Heart right ventricle (tissue), 16 donors: ENCODE measurements at regions of chr10 and their contacts with region 1.

Region 1: GRCh38 chr10:119207367-119207668 is at the start of gene GRK5:
- DNase-seq: peak; percentile 95 to 96
- ATAC-seq: peak; percentile 89 to 98 (median 92)
- H3K4me3 ChIP-seq: peak within 1 kb of the TSS; percentile 72 to 99 (median 95)
- H3K27ac ChIP-seq: peak within 1 kb of the TSS; percentile 91 to 100 (median 98)
- H3K4me1 ChIP-seq: peaks cover 3 to 65% (median 52%) of the 10 kb centered on the region in 9 donors
- H3K27me3 ChIP-seq: no peaks in the 10 kb centered on the region
- CTCF ChIP-seq: no peak
- total RNA-seq, gene GRK5: 11.8 to 80.5 (median 32.5) TPM

Region 2: DNA sequence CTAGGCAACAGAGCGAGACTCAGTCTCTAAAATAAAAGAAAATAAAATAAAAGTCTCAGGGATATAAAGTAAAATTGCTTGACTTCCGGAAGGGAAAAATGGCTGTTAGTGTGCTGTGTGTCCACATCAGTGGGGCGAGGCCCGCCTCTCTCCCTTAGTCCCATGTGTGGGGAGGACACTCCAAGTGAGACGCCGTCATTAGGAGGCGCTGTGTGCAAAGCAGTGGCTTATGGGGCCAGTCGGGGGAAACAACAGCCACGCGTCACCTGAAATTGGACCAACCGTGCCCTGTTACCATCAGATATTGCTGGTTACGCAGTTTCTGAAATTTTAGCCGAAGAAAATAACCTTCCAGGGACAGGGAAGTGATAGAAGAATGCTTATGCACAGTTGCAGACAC is 57.6 kb before region 1 on chr10:
- intact Hi-C with region 1: no loop called
- DNase-seq: no peak
- ATAC-seq: peak in 1 of 8 donors; percentile 23
- H3K4me3 ChIP-seq: no peak overlapping the region
- H3K27ac ChIP-seq: no peak overlapping the region
- H3K4me1 ChIP-seq: peaks cover 0 to 11% (median 0%) of the 10 kb centered on the region in 9 donors
- H3K27me3 ChIP-seq: no peaks in the 10 kb centered on the region
- CTCF ChIP-seq: no peak

Region 3: GRCh38 chr10:119253433-119254174 is 46.3 kb after region 1 on chr10:
- intact Hi-C with region 1: loop called in 6 of 10 experiments (anchors 5 kb)
- DNase-seq: peak; percentile 68 to 73
- ATAC-seq: peak; percentile 65 to 75 (median 71)
- H3K4me3 ChIP-seq: no peak overlapping the region
- H3K27ac ChIP-seq: peak overlapping the region; percentile 57 to 86 (median 82)
- H3K4me1 ChIP-seq: peaks cover 54 to 86% (median 72%) of the 10 kb centered on the region in 9 donors
- H3K27me3 ChIP-seq: no peaks in the 10 kb centered on the region
- CTCF ChIP-seq: peak in 1 of 9 donors; percentile 8

Region 4: GRCh38 chr10:119270762-119271366 is 63.5 kb after region 1 on chr10:
- intact Hi-C with region 1: loop called in 4 of 10 experiments (anchors 2 to 10 kb)
- DNase-seq: peak; percentile 88 to 89
- ATAC-seq: peak; percentile 80 to 95 (median 90)
- H3K4me3 ChIP-seq: peak overlapping the region in 4 of 10 donors; percentile 13 to 37 (median 23)
- H3K27ac ChIP-seq: peak overlapping the region; percentile 48 to 90 (median 86)
- H3K4me1 ChIP-seq: peaks cover 29 to 94% (median 84%) of the 10 kb centered on the region in 9 donors
- H3K27me3 ChIP-seq: no peaks in the 10 kb centered on the region
- CTCF ChIP-seq: no peak

Region 5: DNA sequence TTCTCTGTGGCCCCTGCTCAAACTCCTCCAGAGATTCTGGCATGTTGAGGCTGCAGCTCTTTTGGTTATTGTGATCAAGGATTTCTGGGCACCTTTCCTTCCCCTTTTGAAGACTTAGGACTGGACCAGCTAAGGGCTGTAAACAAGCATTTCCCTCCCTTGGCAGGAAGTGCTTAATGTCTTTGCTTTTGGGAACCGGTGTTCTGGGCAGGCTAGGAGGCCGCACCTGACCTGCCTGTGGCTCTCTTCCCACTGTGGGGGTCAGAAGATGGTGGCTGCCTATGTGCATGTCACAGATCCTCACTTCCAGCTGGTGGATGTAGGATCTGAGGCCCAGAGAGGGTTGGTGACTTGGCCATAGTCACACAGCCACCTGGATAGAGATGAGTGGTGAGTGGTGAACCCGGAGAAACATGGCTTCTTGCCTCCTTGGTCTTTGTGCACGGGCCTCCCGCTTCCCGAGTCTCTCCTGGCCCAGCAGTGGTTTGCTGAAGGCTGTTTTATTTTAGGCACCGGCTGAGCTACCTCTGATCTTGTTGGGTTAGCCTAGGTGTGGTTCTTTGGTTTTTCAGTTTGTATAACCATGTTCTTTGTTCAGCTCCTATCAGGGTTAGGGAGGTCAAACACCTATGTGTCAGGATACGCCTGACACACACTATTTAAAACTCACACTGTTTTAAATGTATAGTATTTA is 82.1 kb after region 1 on chr10:
- intact Hi-C with region 1: loop called in 2 of 10 experiments (anchors 5 to 10 kb)
- DNase-seq: no peak
- ATAC-seq: peak in 4 of 8 donors; percentile 25 to 46 (median 38)
- H3K4me3 ChIP-seq: no peak overlapping the region
- H3K27ac ChIP-seq: peak overlapping the region; percentile 10 to 81 (median 62)
- H3K4me1 ChIP-seq: peaks cover 33 to 90% (median 79%) of the 10 kb centered on the region in 9 donors
- H3K27me3 ChIP-seq: no peaks in the 10 kb centered on the region
- CTCF ChIP-seq: no peak

Region 6: DNA sequence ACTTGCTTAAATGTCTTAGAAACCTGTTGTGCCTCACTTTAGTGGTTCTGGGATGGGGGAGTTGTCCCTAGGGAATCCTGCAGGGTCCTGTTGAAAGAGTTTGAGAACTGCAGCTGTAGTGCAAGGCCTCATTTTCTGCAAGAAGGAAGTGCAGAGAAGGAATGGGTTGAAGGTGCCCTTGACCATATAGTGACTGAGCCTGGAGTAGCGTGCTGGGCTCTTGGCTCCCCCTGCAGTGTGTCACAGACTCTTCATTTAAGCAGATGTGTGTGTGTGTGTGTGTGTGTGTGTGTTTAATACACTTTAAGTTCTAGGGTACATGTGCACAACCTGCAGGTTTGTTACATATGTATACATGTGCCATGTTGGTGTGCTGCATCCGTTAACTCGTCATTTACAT is 92.2 kb after region 1 on chr10:
- intact Hi-C with region 1: loop called in 1 of 10 experiments (anchors 10 kb)
- DNase-seq: no peak
- ATAC-seq: no peak
- H3K4me3 ChIP-seq: no peak overlapping the region
- H3K27ac ChIP-seq: peak overlapping the region in 2 of 10 donors; percentile 4 to 54
- H3K4me1 ChIP-seq: peaks cover 21 to 80% (median 52%) of the 10 kb centered on the region in 9 donors
- H3K27me3 ChIP-seq: no peaks in the 10 kb centered on the region
- CTCF ChIP-seq: peak in 1 of 9 donors; percentile 28

Region 7: GRCh38 chr10:119416855-119417254 is 209.5 kb after region 1 on chr10:
- intact Hi-C with region 1: loop called (anchors 2 to 10 kb)
- DNase-seq: peak; percentile 70 to 72
- ATAC-seq: peak; percentile 13 to 48 (median 36)
- H3K4me3 ChIP-seq: no peak overlapping the region
- H3K27ac ChIP-seq: peak overlapping the region in 9 of 10 donors; percentile 3 to 92 (median 66)
- H3K4me1 ChIP-seq: peaks cover 24 to 73% (median 57%) of the 10 kb centered on the region in 9 donors
- H3K27me3 ChIP-seq: no peaks in the 10 kb centered on the region
- CTCF ChIP-seq: peak; percentile 37 to 88 (median 78)

Region 8: DNA sequence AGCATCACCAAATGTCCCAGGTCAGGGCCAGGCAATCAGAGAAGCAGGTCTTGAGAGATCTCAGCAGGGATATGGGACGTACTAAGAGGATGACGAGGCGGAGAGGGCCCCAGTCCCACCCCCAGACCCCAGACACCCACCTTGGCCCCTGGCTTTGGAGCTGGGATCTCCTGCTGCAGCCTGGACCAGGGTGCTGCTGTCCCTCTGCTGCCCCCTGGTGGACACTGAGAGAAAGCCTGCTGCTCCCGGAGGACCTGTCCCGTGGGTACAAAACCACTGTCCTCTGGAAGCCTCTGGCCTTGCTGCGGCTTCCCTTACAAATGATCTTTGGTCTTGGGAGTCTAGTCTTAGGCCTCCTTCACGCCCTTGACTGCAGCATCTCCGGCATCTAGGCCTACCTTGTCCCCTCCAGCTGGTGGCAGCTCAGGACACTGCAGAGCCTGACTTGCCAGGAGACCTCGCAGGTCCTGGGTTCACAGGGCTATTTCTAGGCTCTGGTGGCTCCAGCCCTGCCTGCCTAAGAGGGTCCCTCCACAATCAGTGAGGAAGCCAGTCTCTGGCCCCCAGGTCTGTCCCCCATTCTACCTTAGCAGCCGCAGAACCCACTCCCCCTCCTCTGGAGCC is 238.1 kb after region 1 on chr10:
- intact Hi-C with region 1: loop called in 3 of 10 experiments (anchors 1 to 10 kb)
- DNase-seq: peak; percentile 85 to 88
- ATAC-seq: peak; percentile 46 to 79 (median 68)
- H3K4me3 ChIP-seq: no peak overlapping the region
- H3K27ac ChIP-seq: peak overlapping the region in 6 of 10 donors; percentile 42 to 68 (median 50)
- H3K4me1 ChIP-seq: peaks cover 11 to 60% (median 32%) of the 10 kb centered on the region in 9 donors
- H3K27me3 ChIP-seq: no peaks in the 10 kb centered on the region
- CTCF ChIP-seq: peak; percentile 95 to 98 (median 97)